ENCODE measurements at regions of chr19 and their contacts with region 1.

Region 1: GRCh38 chr19:43562698-43563241 is 12.6 kb downstream of the XRCC1 start:
- DNase-seq: peak; percentile 88
- ATAC-seq: peak; percentile 90
- H3K4me3 Mint-ChIP-seq: peak overlapping the region; percentile 50
- H3K27ac Mint-ChIP-seq: peak overlapping the region; percentile 97
- H3K4me1 Mint-ChIP-seq: peaks cover 52% of the 10 kb centered on the region
- H3K27me3 Mint-ChIP-seq: no peaks in the 10 kb centered on the region
- CTCF ChIP-seq: no peak

Region 2: DNA sequence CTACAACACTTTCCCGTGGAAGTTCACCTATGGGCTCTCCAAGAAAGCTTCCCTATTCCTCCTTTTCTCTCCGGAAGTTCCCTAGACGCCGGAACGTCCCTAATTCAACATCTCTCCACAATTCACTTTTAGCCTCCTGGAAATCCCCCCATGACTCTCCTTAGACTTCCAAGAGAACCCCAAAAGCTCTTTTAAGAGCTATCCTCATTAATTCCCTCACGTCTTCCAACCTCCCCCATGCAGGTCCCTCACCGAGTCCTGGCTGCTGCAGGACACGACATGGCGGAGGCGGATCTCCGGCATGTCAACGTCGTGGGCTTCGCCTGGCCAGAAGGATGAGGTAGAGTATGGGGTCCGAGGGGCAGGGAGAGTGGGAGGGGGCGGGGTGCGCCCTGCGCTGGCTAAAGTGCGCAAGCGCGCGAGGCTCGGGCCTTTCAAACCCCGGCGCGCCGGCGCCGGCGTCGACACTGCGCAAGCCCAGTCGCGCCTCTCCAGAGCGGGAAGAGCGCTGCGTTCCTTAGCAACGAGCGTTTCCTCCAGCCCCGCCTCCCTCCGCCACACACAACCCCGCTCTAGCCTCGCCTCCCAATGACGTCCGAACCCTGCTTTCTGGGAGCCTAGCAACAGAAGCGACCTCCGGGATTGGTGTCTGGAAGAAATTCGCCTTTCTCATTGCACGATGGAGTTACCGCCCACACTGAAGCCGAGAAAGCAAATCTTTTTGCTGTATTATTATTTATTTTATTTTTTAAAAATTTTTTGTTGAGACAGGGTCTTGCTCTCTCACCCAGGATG is 12.6 kb after region 1 on chr19 and contains the starts of genes PINLYP and XRCC1:
- CTCF ChIA-PET with region 1: interaction called, 5 read pairs
- POLR2A ChIA-PET with region 1: interaction called, 15 read pairs
- intact Hi-C with region 1: no loop called
- DNase-seq: peak; percentile 99
- ATAC-seq: peak; percentile 99
- H3K4me3 Mint-ChIP-seq: peak within 1 kb of the TSS; percentile 96
- H3K27ac Mint-ChIP-seq: peak within 1 kb of the TSS; percentile 94
- H3K4me1 Mint-ChIP-seq: peaks cover 37% of the 10 kb centered on the region
- H3K27me3 Mint-ChIP-seq: no peaks in the 10 kb centered on the region
- CTCF ChIP-seq: no peak
- total RNA-seq, gene PINLYP: 9.7 to 12.3 TPM
- total RNA-seq, gene XRCC1: 29.4 to 32.4 TPM

Measured in activated CD8-positive, alpha-beta T cell treated with anti-CD3 and anti-CD28 coated beads for 36 hours (primary cell).